Activated B cell treated with CpG ODN at 0.5 μM for 24 hours (primary cell): ENCODE measurements at regions of chr13 and their contacts with region 1.

Region 1: GRCh38 chr13:21402586-21403228 is 56.4 kb downstream of the ZDHHC20 start:
- DNase-seq: no peak
- ATAC-seq: no peak
- H3K4me3 Mint-ChIP-seq: no peak overlapping the region
- H3K27ac Mint-ChIP-seq: no peak overlapping the region
- H3K4me1 Mint-ChIP-seq: no peaks in the 10 kb centered on the region
- H3K27me3 Mint-ChIP-seq: no peaks in the 10 kb centered on the region
- CTCF ChIP-seq: no peak

Region 2: GRCh38 chr13:21443171-21443570 is 40.5 kb after region 1 on chr13:
- CTCF ChIA-PET with region 1: no interaction called
- POLR2A ChIA-PET with region 1: no interaction called
- intact Hi-C with region 1: loop called (anchors 5 kb)
- DNase-seq: no peak
- ATAC-seq: no peak
- H3K4me3 Mint-ChIP-seq: no peak overlapping the region
- H3K27ac Mint-ChIP-seq: peak overlapping the region; percentile 32
- H3K4me1 Mint-ChIP-seq: peaks cover 46% of the 10 kb centered on the region
- H3K27me3 Mint-ChIP-seq: no peaks in the 10 kb centered on the region
- CTCF ChIP-seq: no peak